Endothelial cell of umbilical vein (primary cell): ENCODE measurements at regions of chr5 and their contacts with region 1.

Region 1: GRCh38 chr5:84411831-84412605 is 27.3 kb upstream of the EDIL3 start:
- DNase-seq: no peak
- H3K4me3 ChIP-seq: no peak overlapping the region
- H3K27ac ChIP-seq: no peak overlapping the region
- H3K4me1 ChIP-seq: no peaks in the 10 kb centered on the region
- H3K27me3 ChIP-seq: no peaks in the 10 kb centered on the region
- CTCF ChIP-seq: no peak
- POLR2A ChIP-seq: no peak

Region 2: GRCh38 chr5:84425365-84425881 is 13.4 kb after region 1 on chr5:
- CTCF ChIA-PET with region 1: interaction called, 10 read pairs
- POLR2A ChIA-PET with region 1: no interaction called
- dilution Hi-C with region 1: no loop called
- intact Hi-C with region 1: no loop called
- DNase-seq: no peak
- H3K4me3 ChIP-seq: no peak overlapping the region
- H3K27ac ChIP-seq: no peak overlapping the region
- H3K4me1 ChIP-seq: no peaks in the 10 kb centered on the region
- H3K27me3 ChIP-seq: no peaks in the 10 kb centered on the region
- CTCF ChIP-seq: no peak
- POLR2A ChIP-seq: no peak